Breast epithelium (tissue), 4 donors: ENCODE measurements at regions of chr4 and their contacts with region 1.

Region 1: GRCh38 chr4:162861133-162861532 is 305.6 kb downstream of the NAF1 start:
- DNase-seq: no peak
- H3K4me3 ChIP-seq: no peak overlapping the region
- H3K27ac ChIP-seq: no peak overlapping the region
- H3K4me1 ChIP-seq: no peaks in the 10 kb centered on the region
- H3K27me3 ChIP-seq: no peaks in the 10 kb centered on the region
- CTCF ChIP-seq: no peak
- POLR2A ChIP-seq: no peak

Region 2: GRCh38 chr4:162891788-162892707 is 30.9 kb after region 1 on chr4:
- intact Hi-C with region 1: no loop called
- DNase-seq: no peak
- H3K4me3 ChIP-seq: no peak overlapping the region
- H3K27ac ChIP-seq: no peak overlapping the region
- H3K4me1 ChIP-seq: no peaks in the 10 kb centered on the region
- H3K27me3 ChIP-seq: no peaks in the 10 kb centered on the region
- CTCF ChIP-seq: no peak
- POLR2A ChIP-seq: no peak

Region 3: DNA sequence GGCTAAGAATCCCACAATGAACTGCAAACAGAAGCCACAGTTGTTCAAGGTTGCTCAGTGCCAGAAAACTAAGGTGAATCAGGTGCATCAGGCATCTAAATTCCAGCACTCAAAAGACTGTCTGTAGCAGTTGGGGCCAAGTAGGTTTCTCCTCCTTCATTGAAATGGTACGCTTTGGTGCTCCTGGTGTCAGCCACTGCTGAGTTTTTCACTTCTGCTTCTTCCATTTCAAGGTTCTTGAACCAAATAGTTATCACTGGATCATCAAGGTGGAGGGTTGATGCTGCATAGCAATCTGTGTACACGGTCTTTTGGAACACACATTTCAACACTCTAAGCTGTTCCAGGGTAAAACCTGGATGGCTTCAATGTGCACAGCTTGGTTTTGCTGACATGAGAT is 707.7 kb after region 1 on chr4:
- intact Hi-C with region 1: loop called (anchors 5 kb)
- DNase-seq: no peak
- H3K4me3 ChIP-seq: no peak overlapping the region
- H3K27ac ChIP-seq: no peak overlapping the region
- H3K4me1 ChIP-seq: no peaks in the 10 kb centered on the region
- H3K27me3 ChIP-seq: no peaks in the 10 kb centered on the region
- CTCF ChIP-seq: no peak
- POLR2A ChIP-seq: no peak